Spleen (tissue), 13 donors: ENCODE measurements at regions of chr6 and their contacts with region 1.

Region 1: GRCh38 chr6:79078075-79079025 is at the start of gene PHIP:
- DNase-seq: peak; percentile 98
- H3K4me3 ChIP-seq: peak within 1 kb of the TSS; percentile 68 to 95 (median 82)
- H3K27ac ChIP-seq: peak within 1 kb of the TSS; percentile 97 to 99 (median 98)
- H3K4me1 ChIP-seq: peaks cover 14 to 51% (median 44%) of the 10 kb centered on the region in 6 donors
- H3K27me3 ChIP-seq: no peaks in the 10 kb centered on the region
- CTCF ChIP-seq: peak in 5 of 11 experiments; percentile 10 to 44 (median 15)
- POLR2A ChIP-seq: peak in 2 of 3 donors; percentile 54 to 66
- total RNA-seq, gene PHIP: 34.4 to 51.3 (median 38.5) TPM

Region 2: GRCh38 chr6:79233611-79234149 is 155.3 kb after region 1 on chr6:
- intact Hi-C with region 1: loop called (anchors 5 kb)
- DNase-seq: peak; percentile 95
- H3K4me3 ChIP-seq: peak overlapping the region; percentile 67 to 88 (median 72)
- H3K27ac ChIP-seq: peak overlapping the region; percentile 82 to 93 (median 89)
- H3K4me1 ChIP-seq: peaks cover 4 to 31% (median 15%) of the 10 kb centered on the region in 6 donors
- H3K27me3 ChIP-seq: no peaks in the 10 kb centered on the region
- CTCF ChIP-seq: peak in 10 of 11 experiments; percentile 23 to 61 (median 47)
- POLR2A ChIP-seq: no peak

Region 3: DNA sequence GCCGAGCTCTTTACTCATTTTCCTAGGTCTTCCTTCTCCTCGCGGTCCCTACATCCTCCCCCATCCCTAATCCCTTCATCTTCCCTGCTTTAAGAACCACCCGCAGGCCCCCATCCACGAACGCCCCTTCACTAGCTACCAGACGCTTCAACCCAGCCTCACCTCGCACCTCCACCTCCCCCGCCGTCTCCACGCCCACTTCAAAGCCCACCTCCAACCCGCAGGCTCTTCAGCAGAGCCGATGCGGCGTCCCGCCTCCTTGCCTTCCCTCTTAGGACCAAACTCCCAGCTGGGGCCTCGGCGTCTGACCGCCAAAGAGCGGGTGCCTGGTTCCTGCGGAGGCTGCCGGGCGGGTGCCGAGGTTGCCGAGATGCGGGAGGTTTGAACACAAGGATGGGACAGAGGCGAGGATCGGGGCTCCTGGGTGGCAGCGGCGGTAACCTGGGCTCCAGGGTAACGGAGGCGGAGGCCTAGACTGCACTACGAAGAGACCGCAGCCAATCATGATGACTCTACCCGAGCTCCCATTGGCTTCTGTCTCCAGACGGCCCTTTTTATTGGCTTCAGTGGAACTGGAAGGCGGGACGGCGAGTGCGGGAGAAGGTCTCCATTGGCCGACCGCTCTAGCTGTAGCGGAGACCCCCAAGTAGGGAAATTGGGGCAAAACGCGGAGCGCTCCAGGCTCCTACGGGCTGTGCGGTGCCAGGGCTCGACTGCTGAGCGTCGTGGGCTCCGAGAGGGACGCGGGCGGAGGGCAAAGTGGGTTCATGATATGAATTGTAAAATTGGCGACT is 458.8 kb after region 1 on chr6 and contains the start of gene LCA5:
- intact Hi-C with region 1: loop called (anchors 10 kb)
- DNase-seq: peak; percentile 94
- H3K4me3 ChIP-seq: peak within 1 kb of the TSS; percentile 66 to 88 (median 76)
- H3K27ac ChIP-seq: peak within 1 kb of the TSS; percentile 44 to 86 (median 78)
- H3K4me1 ChIP-seq: peaks cover 0 to 23% (median 0%) of the 10 kb centered on the region in 6 donors
- H3K27me3 ChIP-seq: peaks cover 0 to 7% (median 0%) of the 10 kb centered on the region in 7 donors
- CTCF ChIP-seq: no peak
- POLR2A ChIP-seq: peak in 1 of 3 donors; percentile 59
- total RNA-seq, gene LCA5: 1.7 to 3.5 (median 2.3) TPM